Transverse colon (tissue), 4 donors: ENCODE measurements at regions of chr19 and their contacts with region 1.

Region 1: DNA sequence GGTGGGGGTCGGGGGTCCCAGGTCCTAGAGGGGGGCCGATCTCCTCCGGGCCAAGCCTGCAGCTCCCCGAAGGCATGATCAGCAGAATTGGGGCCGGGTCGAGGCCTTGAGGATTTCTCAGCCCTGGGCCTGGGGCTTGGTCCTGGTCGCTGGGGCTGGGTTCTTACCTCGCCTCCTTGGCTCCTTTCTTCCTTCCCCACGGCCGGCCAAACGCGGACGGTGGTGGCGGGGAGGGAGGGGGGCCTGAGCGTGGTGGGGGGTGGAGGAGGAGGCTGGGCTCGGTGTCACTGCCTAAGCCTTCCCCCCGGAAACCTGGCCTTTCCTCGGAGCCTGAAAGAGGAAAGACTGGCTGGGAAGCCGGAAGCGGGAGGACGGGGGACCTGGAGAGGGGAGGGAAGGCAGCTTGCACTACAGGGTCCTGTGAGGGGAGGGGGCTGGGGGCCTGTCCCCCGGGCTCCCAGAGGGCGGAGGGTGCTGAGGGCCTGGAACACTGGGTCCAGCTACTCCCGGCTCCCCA is at the start of gene ZNF579:
- DNase-seq: peak; percentile 90
- H3K4me3 ChIP-seq: peak within 1 kb of the TSS; percentile 71 to 95 (median 86)
- H3K27ac ChIP-seq: peak within 1 kb of the TSS; percentile 86 to 94 (median 90)
- H3K4me1 ChIP-seq: peaks cover 0 to 28% (median 21%) of the 10 kb centered on the region in 4 donors
- H3K27me3 ChIP-seq: peaks cover under 1% of the 10 kb centered on the region
- CTCF ChIP-seq: no peak
- EP300 ChIP-seq: no peak
- POLR2A ChIP-seq: no peak
- total RNA-seq, gene ZNF579: 2.0 to 5.6 (median 2.9) TPM

Region 2: DNA sequence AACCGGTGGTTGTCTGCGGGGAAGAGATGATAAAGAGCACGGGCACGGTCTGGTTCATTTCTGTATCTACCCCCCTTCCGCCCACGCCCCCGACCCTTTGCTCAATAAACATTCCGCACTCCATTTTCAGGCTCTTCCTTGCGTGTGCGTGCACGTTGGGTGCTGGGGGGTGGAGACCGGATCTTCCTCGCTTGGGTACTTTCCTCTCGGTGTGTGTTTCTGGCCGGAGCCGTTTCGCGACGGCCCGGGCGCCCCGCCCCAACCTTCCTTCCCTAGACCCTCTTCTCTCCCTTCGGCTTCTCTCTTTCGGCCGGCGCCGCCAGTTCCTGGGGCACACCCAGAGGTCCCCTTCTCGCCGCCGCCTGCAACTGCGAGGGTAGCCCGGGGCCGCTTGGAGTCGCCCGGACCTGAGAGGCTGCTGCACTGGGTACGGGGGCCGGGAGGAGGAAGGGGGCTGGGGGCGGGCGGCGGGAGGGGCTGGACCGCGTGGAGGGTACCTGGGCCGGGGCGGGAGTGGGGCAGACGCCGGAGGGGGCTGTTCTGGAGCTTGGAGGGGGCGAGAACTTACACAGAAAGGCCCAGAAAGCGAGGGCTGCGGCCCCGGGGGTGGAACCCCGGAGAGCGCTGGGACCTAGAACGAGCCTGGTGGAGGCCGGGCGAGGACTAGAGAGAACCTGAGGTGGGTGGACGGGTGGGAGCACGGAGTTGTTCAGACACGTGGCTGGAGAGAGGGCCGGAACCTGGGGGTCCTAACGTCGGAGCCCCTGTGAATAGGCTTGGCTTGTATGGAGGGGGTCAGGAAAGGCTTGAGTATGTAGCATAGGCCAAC is 62.9 kb after region 1 on chr19 and contains the start of gene ZNF581:
- in situ Hi-C with region 1: no loop called
- intact Hi-C with region 1: loop called (anchors 2 kb)
- DNase-seq: peak; percentile 82
- H3K4me3 ChIP-seq: peak within 1 kb of the TSS; percentile 89 to 99 (median 94)
- H3K27ac ChIP-seq: peak within 1 kb of the TSS; percentile 93 to 98 (median 95)
- H3K4me1 ChIP-seq: peaks cover 22 to 58% (median 49%) of the 10 kb centered on the region in 4 donors
- H3K27me3 ChIP-seq: no peaks in the 10 kb centered on the region
- CTCF ChIP-seq: no peak
- EP300 ChIP-seq: no peak
- POLR2A ChIP-seq: peak; percentile 47
- total RNA-seq, gene ZNF581: 4.1 to 19.7 (median 10.0) TPM